ENCODE measurements at regions of chrX and their contacts with region 1.

Region 1: GRCh38 chrX:9785944-9786797 is at the start of gene SHROOM2:
- DNase-seq: no peak
- H3K4me3 ChIP-seq: peak within 1 kb of the TSS; percentile 18 to 83 (median 73)
- H3K27ac ChIP-seq: peak within 1 kb of the TSS; percentile 35
- H3K4me1 ChIP-seq: peaks cover 9% of the 10 kb centered on the region
- H3K27me3 ChIP-seq: no peaks in the 10 kb centered on the region
- CTCF ChIP-seq: no peak
- POLR2A ChIP-seq: no peak
- total RNA-seq, gene SHROOM2: 10.4 and 11.8 TPM in 2 replicates

Region 2: GRCh38 chrX:9770319-9770718 is 15.9 kb before region 1 on chrX:
- CTCF ChIA-PET with region 1: interaction called, 3 read pairs
- POLR2A ChIA-PET with region 1: no interaction called
- dilution Hi-C with region 1: no loop called
- intact Hi-C with region 1: loop called (anchors 2 kb)
- DNase-seq: peak; percentile 72
- H3K4me3 ChIP-seq: no peak overlapping the region
- H3K27ac ChIP-seq: peak overlapping the region; percentile 57
- H3K4me1 ChIP-seq: peaks cover 25% of the 10 kb centered on the region
- H3K27me3 ChIP-seq: no peaks in the 10 kb centered on the region
- CTCF ChIP-seq: no peak
- POLR2A ChIP-seq: no peak

Region 3: DNA sequence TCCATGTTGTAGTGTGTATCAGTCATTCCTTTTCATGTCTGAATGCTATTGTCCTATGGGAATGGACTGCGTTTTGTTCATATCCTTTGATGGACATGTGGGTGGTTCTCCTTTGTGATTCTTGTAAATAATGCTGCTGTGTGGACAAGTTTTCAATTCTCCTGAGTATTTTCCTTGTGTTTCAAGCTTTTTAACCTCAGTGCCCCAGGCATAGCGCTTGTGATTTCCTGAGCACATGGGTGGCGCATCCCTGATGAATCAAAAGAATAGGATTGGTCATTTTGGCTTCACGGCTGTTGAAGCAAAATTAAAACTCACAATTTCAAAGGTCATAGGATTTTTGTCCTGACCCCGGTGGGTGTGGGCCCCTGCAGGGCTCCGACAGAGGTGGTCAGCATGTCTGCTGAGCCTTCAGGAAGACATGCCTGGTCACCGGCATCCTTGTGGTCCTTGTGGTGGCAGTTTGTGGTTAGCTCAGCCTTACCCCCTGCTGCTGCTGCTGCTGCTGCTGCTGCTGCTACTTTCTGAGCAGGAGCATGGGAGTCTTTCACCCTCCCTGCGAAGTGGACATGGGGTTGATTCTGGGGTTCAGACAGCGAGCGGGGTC is 30.0 kb after region 1 on chrX:
- CTCF ChIA-PET with region 1: no interaction called
- POLR2A ChIA-PET with region 1: no interaction called
- dilution Hi-C with region 1: no loop called
- intact Hi-C with region 1: loop called (anchors 1 kb)
- DNase-seq: no peak
- H3K4me3 ChIP-seq: no peak overlapping the region
- H3K27ac ChIP-seq: no peak overlapping the region
- H3K4me1 ChIP-seq: no peaks in the 10 kb centered on the region
- H3K27me3 ChIP-seq: no peaks in the 10 kb centered on the region
- CTCF ChIP-seq: no peak
- POLR2A ChIP-seq: no peak

Region 4: DNA sequence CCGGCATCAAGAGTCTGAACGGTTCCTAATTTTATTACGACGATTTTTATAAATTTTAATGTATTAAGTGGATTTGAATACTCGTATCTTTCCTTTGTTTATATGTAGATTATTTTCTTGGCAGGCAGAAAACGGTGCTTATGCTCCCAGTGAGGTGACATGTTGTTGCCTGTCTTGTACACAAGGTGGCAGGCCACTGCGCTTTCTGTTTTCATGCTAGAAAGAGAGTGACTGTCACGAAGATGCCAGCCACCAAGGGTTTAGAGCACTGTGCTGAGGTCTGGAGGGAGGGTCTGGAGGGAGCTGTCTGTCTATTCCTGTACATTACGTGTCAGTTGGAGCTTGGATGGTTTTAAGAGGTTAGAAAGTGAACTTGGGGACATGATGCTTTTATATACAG is 87.8 kb after region 1 on chrX:
- CTCF ChIA-PET with region 1: no interaction called
- POLR2A ChIA-PET with region 1: no interaction called
- dilution Hi-C with region 1: no loop called
- intact Hi-C with region 1: loop called (anchors 5 kb)
- DNase-seq: peak; percentile 44
- H3K4me3 ChIP-seq: no peak overlapping the region
- H3K27ac ChIP-seq: peak overlapping the region; percentile 7
- H3K4me1 ChIP-seq: peaks cover 3% of the 10 kb centered on the region
- H3K27me3 ChIP-seq: no peaks in the 10 kb centered on the region
- CTCF ChIP-seq: peak; percentile 39 to 52
- POLR2A ChIP-seq: no peak

Measured in endothelial cell of umbilical vein (primary cell).